ENCODE measurements at regions of chr5 and their contacts with region 1.

Region 1: GRCh38 chr5:86679529-86679928 is 61.8 kb downstream of the COX7C start:
- DNase-seq: peak in 1 of 2 donors; percentile 75
- H3K4me3 ChIP-seq: no peak overlapping the region
- H3K27ac ChIP-seq: peak overlapping the region; percentile 72 to 80
- H3K4me1 ChIP-seq: no peaks in the 10 kb centered on the region
- H3K27me3 ChIP-seq: no peaks in the 10 kb centered on the region
- CTCF ChIP-seq: peak; percentile 43 to 67 (median 62)

Region 2: GRCh38 chr5:86354664-86355063 is 324.9 kb before region 1 on chr5:
- intact Hi-C with region 1: no loop called
- DNase-seq: no peak
- H3K4me3 ChIP-seq: no peak overlapping the region
- H3K27ac ChIP-seq: no peak overlapping the region
- H3K4me1 ChIP-seq: no peaks in the 10 kb centered on the region
- H3K27me3 ChIP-seq: no peaks in the 10 kb centered on the region
- CTCF ChIP-seq: no peak

Region 3: GRCh38 chr5:86617756-86618576 is 61.6 kb before region 1 on chr5 and contains the start of gene COX7C:
- intact Hi-C with region 1: loop called (anchors 1 kb)
- DNase-seq: peak; percentile 59 to 97
- H3K4me3 ChIP-seq: peak within 1 kb of the TSS; percentile 74 to 93
- H3K27ac ChIP-seq: peak within 1 kb of the TSS; percentile 76 to 86
- H3K4me1 ChIP-seq: peaks cover 0 to 10% of the 10 kb centered on the region in 2 donors
- H3K27me3 ChIP-seq: no peaks in the 10 kb centered on the region
- CTCF ChIP-seq: no peak
- total RNA-seq, gene COX7C: 128 TPM